ENCODE measurements at regions of chr18 and their contacts with region 1.

Region 1: GRCh38 chr18:55405893-55406406 is 182.0 kb downstream of the TCF4 start:
- DNase-seq: peak; percentile 57 to 95
- H3K4me3 ChIP-seq: peak overlapping the region in 1 of 2 donors; percentile 29
- H3K27ac ChIP-seq: peak overlapping the region; percentile 49 to 68
- H3K4me1 ChIP-seq: peaks cover 0 to 14% of the 10 kb centered on the region in 2 donors
- H3K27me3 ChIP-seq: no peaks in the 10 kb centered on the region
- CTCF ChIP-seq: no peak

Region 2: GRCh38 chr18:55243857-55244256 is 162.1 kb before region 1 on chr18:
- intact Hi-C with region 1: loop called (anchors 5 kb)
- DNase-seq: peak in 1 of 2 donors; percentile 74
- H3K4me3 ChIP-seq: peak overlapping the region; percentile 42 to 45
- H3K27ac ChIP-seq: peak overlapping the region; percentile 80 to 87
- H3K4me1 ChIP-seq: peaks cover 0 to 33% of the 10 kb centered on the region in 2 donors
- H3K27me3 ChIP-seq: no peaks in the 10 kb centered on the region
- CTCF ChIP-seq: no peak

Region 3: GRCh38 chr18:55322178-55322735 is 83.7 kb before region 1 on chr18:
- intact Hi-C with region 1: loop called (anchors 2 kb)
- DNase-seq: peak; percentile 59 to 89
- H3K4me3 ChIP-seq: peak overlapping the region; percentile 67 to 69
- H3K27ac ChIP-seq: peak overlapping the region; percentile 78 to 92
- H3K4me1 ChIP-seq: peaks cover 0 to 29% of the 10 kb centered on the region in 2 donors
- H3K27me3 ChIP-seq: no peaks in the 10 kb centered on the region
- CTCF ChIP-seq: peak in 1 of 3 experiments; percentile 8

Region 4: GRCh38 chr18:55343396-55344073 is 62.4 kb before region 1 on chr18:
- intact Hi-C with region 1: loop called (anchors 5 kb)
- DNase-seq: no peak
- H3K4me3 ChIP-seq: no peak overlapping the region
- H3K27ac ChIP-seq: no peak overlapping the region
- H3K4me1 ChIP-seq: peaks cover 0 to 7% of the 10 kb centered on the region in 2 donors
- H3K27me3 ChIP-seq: no peaks in the 10 kb centered on the region
- CTCF ChIP-seq: peak; percentile 32 to 69 (median 67)

Region 5: GRCh38 chr18:55477499-55477859 is 71.5 kb after region 1 on chr18:
- intact Hi-C with region 1: loop called (anchors 5 kb)
- DNase-seq: peak in 1 of 2 donors; percentile 68
- H3K4me3 ChIP-seq: peak overlapping the region; percentile 51 to 75
- H3K27ac ChIP-seq: peak overlapping the region; percentile 81 to 85
- H3K4me1 ChIP-seq: peaks cover 0 to 6% of the 10 kb centered on the region in 2 donors
- H3K27me3 ChIP-seq: no peaks in the 10 kb centered on the region
- CTCF ChIP-seq: peak in 1 of 3 experiments; percentile 13

Region 6: GRCh38 chr18:55861266-55861665 is 455.3 kb after region 1 on chr18:
- intact Hi-C with region 1: loop called (anchors 10 kb)
- DNase-seq: no peak
- H3K4me3 ChIP-seq: no peak overlapping the region
- H3K27ac ChIP-seq: no peak overlapping the region
- H3K4me1 ChIP-seq: no peaks in the 10 kb centered on the region
- H3K27me3 ChIP-seq: no peaks in the 10 kb centered on the region
- CTCF ChIP-seq: peak in 2 of 3 experiments; percentile 6 to 43

Measured in ascending aorta (tissue), 2 donors.